ENCODE measurements at regions of chr19 and their contacts with region 1.

Region 1: DNA sequence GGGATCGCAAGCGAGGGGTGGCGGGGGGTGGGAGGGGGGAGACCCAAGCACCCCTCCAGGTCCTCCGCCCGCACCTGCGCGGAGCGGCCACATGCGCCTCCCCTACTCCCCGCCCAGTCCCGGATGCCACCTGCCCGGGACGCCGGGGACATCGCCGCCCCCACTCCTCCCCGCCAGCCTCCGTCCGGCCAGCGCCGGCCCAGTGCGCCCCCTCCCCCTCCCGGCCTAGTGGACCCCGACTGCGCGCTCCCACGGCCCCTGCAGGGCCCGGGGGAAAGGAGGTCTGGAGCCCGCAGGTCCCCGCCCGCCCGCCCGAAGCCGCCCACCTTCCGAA is 263 bp downstream of the RHPN2 start:
- DNase-seq: no peak
- ATAC-seq: peak; percentile 74
- H3K4me3 ChIP-seq: peak overlapping the region; percentile 71 to 98
- H3K27ac ChIP-seq: no peak overlapping the region; the same call in 1 of the 2 replicates
- H3K4me1 ChIP-seq: peaks cover 62% of the 10 kb centered on the region
- H3K27me3 ChIP-seq: no peaks in the 10 kb centered on the region
- CTCF ChIP-seq: no peak

Region 2: GRCh38 chr19:33040994-33041827 is 23.2 kb before region 1 on chr19:
- CTCF ChIA-PET with region 1: interaction called, 4 read pairs
- POLR2A ChIA-PET with region 1: interaction called, 10 read pairs
- in situ Hi-C with region 1: no loop called
- intact Hi-C with region 1: no loop called
- DNase-seq: peak; percentile 82
- ATAC-seq: peak; percentile 90
- H3K4me3 ChIP-seq: peak overlapping the region in 1 of 2 experiments; percentile 23; a peak in 2 of 4 replicates
- H3K27ac ChIP-seq: peak overlapping the region; percentile 96
- H3K4me1 ChIP-seq: peaks cover 61% of the 10 kb centered on the region
- H3K27me3 ChIP-seq: no peaks in the 10 kb centered on the region
- CTCF ChIP-seq: no peak

Region 3: DNA sequence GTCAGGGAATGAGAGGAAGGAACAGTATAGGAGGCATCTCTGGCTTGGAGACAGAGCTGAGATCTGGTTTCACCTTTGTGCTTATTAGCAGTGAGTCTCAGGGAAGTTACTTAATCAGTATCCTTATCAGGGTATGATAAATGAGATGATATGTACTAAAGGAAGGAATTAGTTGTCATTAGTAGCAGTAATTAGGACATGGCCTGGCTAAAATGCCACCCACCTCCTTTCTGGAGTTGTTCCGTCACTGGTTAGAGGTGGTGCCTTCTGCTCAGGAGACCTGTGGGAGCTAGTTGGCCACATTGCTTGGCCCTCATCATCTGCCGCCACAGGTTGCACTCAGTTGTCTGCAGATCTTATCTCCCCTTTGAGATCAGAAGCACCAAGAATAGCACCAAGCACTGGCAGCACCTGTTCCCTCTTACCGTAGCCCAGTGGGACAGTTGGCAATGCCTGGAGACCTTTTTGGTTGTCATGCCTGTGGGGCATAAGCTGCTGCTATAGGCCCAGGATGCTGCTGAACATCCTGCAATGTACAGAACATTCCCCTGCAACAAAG is 21.2 kb after region 1 on chr19:
- CTCF ChIA-PET with region 1: no interaction called
- POLR2A ChIA-PET with region 1: interaction called, 10 read pairs
- in situ Hi-C with region 1: no loop called
- intact Hi-C with region 1: no loop called
- DNase-seq: no peak
- ATAC-seq: no peak
- H3K4me3 ChIP-seq: no peak overlapping the region
- H3K27ac ChIP-seq: peak overlapping the region; percentile 48; the same call in 1 of the 2 replicates
- H3K4me1 ChIP-seq: peaks cover 14% of the 10 kb centered on the region
- H3K27me3 ChIP-seq: no peaks in the 10 kb centered on the region
- CTCF ChIP-seq: no peak

Region 4: GRCh38 chr19:33134571-33135041 is 70.2 kb after region 1 on chr19:
- CTCF ChIA-PET with region 1: no interaction called
- POLR2A ChIA-PET with region 1: no interaction called
- in situ Hi-C with region 1: no loop called
- intact Hi-C with region 1: no loop called
- DNase-seq: no peak
- ATAC-seq: no peak
- H3K4me3 ChIP-seq: no peak overlapping the region
- H3K27ac ChIP-seq: no peak overlapping the region
- H3K4me1 ChIP-seq: peaks cover 9% of the 10 kb centered on the region
- H3K27me3 ChIP-seq: no peaks in the 10 kb centered on the region
- CTCF ChIP-seq: no peak